ENCODE measurements at regions of chr1 and their contacts with region 1.

Region 1: DNA sequence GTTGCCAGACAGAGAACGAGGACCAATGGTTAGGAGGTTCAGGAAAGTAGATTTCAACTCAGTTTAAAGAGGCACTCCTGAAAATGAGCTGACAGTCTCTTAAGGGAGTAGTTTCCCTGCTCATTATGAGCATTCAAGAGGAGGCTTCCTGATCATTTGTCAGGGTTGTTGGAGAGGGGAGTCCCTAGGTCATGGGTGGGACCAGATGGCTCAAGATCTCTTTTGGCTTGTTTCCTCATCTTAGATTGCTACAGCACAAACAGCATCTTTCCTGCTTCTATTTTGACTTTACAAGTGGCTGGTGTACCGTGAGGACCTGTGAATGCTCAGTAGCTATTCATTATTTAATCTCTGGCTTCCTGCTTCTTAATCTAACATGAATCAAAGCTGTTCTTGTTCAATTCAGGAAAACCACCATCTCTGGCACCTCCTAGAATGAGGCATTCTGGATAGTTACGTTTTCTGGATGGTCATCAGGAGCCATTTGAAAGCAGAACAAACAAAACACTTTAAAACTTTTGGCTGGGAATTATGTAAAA is 47.6 kb downstream of the PEX14 start:
- DNase-seq: peak; percentile 52
- H3K4me3 ChIP-seq: no peak overlapping the region
- H3K27ac ChIP-seq: no peak overlapping the region
- H3K4me1 ChIP-seq: peaks cover 35% of the 10 kb centered on the region
- H3K27me3 ChIP-seq: no peaks in the 10 kb centered on the region
- CTCF ChIP-seq: no peak

Region 2: DNA sequence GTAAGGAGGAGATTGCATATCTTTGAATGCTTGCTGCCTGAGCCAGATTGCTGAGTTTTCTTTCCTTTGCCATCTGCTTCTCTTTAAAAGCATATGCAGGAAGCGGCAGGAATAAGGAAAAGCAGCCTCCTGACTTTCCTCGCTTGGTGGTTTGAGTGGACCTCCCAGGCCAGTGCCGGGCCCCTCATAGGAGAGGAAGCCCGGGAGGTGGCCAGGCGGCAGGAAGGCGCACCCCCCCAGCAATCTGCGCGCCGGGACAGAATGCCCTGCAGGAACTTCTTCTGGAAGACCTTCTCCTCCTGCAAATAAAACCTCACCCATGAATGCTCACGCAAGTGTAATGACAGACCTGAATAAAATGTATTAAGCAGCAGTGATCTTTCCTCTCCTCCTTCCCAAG is 71.1 kb before region 1 on chr1:
- CTCF ChIA-PET with region 1: no interaction called
- POLR2A ChIA-PET with region 1: no interaction called
- intact Hi-C with region 1: no loop called
- DNase-seq: no peak
- H3K4me3 ChIP-seq: no peak overlapping the region
- H3K27ac ChIP-seq: no peak overlapping the region
- H3K4me1 ChIP-seq: no peaks in the 10 kb centered on the region
- H3K27me3 ChIP-seq: no peaks in the 10 kb centered on the region
- CTCF ChIP-seq: no peak

Region 3: GRCh38 chr1:11099310-11100149 is 577.1 kb after region 1 on chr1 and contains the start of gene EXOSC10:
- CTCF ChIA-PET with region 1: no interaction called
- POLR2A ChIA-PET with region 1: interaction called, 17 read pairs
- intact Hi-C with region 1: no loop called
- DNase-seq: peak; percentile 95
- H3K4me3 ChIP-seq: peak within 1 kb of the TSS; percentile 90
- H3K27ac ChIP-seq: peak within 1 kb of the TSS; percentile 94
- H3K4me1 ChIP-seq: peaks cover 11% of the 10 kb centered on the region
- H3K27me3 ChIP-seq: no peaks in the 10 kb centered on the region
- CTCF ChIP-seq: no peak
- total RNA-seq, gene EXOSC10: 112 and 119 TPM in 2 replicates